Activated B cell treated with CpG ODN at 0.5 μM for 24 hours (primary cell): ENCODE measurements at regions of chr5 and their contacts with region 1.

Region 1: DNA sequence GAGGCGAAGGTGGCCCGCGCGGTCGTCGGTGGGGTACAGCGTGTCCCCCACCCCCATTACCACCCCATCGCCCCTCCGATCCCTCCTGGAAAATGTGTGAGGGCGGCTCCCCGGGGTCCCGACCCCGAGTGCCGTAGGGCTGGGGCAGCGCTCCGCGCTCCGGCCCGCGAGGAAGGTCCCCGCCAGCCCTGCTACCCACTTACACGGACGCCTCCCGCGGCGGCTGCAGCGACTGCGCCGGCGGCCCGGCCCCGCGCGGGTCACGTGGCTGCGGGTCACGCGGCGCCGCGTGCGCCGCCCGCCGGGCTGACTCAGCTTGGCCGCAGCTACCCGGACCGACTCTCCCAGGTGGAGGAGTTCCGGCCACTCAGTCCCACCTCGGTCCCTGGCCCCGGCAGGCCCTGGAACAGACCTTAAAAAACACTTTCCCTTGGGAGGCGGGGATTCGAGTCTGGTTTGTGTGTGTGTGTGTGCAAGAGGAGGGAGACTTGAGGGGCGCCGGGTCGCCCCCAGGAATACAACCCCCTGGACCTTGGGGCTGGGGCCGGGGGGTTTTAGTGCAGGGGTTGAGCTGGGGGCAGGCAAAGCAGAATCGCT is at the start of gene GNPDA1:
- DNase-seq: peak; percentile 76
- ATAC-seq: peak; percentile 83
- H3K4me3 Mint-ChIP-seq: peak within 1 kb of the TSS; percentile 88
- H3K27ac Mint-ChIP-seq: peak within 1 kb of the TSS; percentile 86
- H3K4me1 Mint-ChIP-seq: peaks cover 44% of the 10 kb centered on the region
- H3K27me3 Mint-ChIP-seq: no peaks in the 10 kb centered on the region
- CTCF ChIP-seq: no peak
- total RNA-seq, gene GNPDA1: 14.2 and 15.0 TPM in 2 replicates

Region 2: DNA sequence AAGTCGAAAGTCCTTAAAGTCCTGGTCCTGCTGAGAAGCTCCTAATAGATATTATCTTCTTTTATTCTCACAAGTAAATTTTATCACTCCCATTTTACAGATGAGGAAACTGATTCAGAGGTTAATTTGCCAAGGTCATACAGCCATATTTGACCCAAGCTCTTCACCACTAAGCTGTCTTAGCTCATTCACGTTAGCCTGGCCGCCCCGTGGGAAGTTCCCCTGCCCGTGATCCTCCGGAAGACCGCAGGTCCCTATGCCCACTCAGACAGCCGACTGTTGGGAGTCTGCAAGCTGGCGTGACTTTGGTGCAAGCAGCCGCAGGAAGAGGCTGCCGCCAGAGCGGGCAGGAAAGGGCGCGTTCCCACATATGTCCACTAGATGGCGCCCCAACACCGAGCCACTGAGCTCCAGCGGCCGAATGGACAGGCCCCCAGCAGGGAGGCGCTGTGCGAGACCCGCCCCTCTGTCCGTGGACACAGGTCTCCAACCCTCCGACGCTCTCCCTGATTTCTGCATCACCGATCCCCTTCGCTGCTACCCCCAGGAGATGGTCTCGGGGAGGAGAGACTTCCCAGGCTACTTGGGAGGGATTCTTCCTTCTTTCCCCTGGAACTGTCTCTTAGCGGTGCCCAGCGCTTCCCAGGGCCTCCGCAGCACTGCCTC is 320.9 kb before region 1 on chr5:
- CTCF ChIA-PET with region 1: interaction called, 29 read pairs
- POLR2A ChIA-PET with region 1: no interaction called
- intact Hi-C with region 1: loop called (anchors 1 kb)
- DNase-seq: peak; percentile 83
- ATAC-seq: peak; percentile 98
- H3K4me3 Mint-ChIP-seq: peak overlapping the region; percentile 47
- H3K27ac Mint-ChIP-seq: no peak overlapping the region
- H3K4me1 Mint-ChIP-seq: peaks cover 11% of the 10 kb centered on the region
- H3K27me3 Mint-ChIP-seq: peaks cover 52% of the 10 kb centered on the region
- CTCF ChIP-seq: peak; percentile 81

Region 3: GRCh38 chr5:141889282-141889871 is 123.5 kb before region 1 on chr5:
- CTCF ChIA-PET with region 1: no interaction called
- POLR2A ChIA-PET with region 1: no interaction called
- intact Hi-C with region 1: no loop called
- DNase-seq: no peak
- ATAC-seq: no peak
- H3K4me3 Mint-ChIP-seq: no peak overlapping the region
- H3K27ac Mint-ChIP-seq: no peak overlapping the region
- H3K4me1 Mint-ChIP-seq: peaks cover 4% of the 10 kb centered on the region
- H3K27me3 Mint-ChIP-seq: peaks cover 31% of the 10 kb centered on the region
- CTCF ChIP-seq: no peak

Region 4: DNA sequence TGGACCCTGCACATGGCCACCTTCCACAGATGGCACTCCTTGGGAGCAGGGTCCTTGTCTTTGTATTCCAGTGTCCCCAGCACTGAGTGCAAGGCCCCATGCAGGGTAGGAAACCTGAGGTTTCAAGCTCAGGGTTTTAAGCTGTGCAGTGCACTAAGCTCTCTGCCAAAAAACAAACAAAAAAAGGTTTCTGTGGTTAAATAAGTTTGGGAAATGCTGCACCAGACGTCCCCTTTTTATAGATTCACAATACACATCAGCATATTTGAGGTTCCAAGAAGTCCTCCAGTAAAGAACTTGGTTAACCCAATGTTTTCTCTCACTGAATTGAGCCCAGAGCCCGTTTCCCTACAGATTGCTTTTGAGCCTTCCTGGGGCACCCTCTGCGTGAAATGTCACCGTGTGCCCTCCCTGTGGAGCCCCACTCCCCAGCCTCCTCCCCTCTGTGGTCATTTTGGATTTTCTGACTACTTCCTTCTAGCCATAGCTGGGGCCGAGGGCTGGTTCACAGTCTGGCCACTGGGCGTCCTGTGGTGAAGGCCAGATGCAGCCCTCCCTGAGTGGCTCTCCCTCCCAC is 72.1 kb before region 1 on chr5:
- CTCF ChIA-PET with region 1: no interaction called
- POLR2A ChIA-PET with region 1: no interaction called
- intact Hi-C with region 1: no loop called
- DNase-seq: no peak
- ATAC-seq: no peak
- H3K4me3 Mint-ChIP-seq: no peak overlapping the region
- H3K27ac Mint-ChIP-seq: peak overlapping the region; percentile 27
- H3K4me1 Mint-ChIP-seq: no peaks in the 10 kb centered on the region
- H3K27me3 Mint-ChIP-seq: no peaks in the 10 kb centered on the region
- CTCF ChIP-seq: no peak

Region 5: DNA sequence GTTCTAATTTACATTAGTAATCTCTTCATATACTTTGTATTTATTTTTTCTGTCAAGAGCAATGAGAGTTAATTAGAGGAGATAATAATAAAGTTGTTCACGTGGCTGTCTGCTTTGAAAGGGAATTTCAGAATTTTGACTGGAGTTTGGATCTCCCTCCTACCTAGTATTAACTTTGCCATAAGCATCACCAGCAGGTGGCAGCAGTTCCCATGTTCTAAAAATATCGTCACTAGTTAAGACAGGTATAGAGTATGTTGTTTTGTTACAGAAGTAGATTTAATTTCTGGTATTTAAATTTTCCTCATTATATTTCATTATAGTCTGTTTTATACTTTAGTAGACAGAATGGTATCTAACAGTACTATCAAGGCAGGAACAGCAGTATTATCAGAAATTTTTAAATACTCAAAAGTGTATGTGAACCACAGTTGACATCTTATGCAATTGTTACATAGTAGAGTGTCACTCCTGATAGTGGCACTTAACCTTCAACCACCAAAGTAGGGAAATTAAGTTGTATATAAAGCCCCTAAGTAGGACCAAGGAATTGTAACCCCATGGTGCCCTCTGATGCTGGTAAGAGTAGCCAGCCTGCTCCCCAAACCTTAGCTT is 20.4 kb before region 1 on chr5:
- CTCF ChIA-PET with region 1: interaction called, 25 read pairs
- POLR2A ChIA-PET with region 1: interaction called, 3 read pairs
- intact Hi-C with region 1: loop called (anchors 1 kb)
- DNase-seq: no peak
- ATAC-seq: peak; percentile 50
- H3K4me3 Mint-ChIP-seq: no peak overlapping the region
- H3K27ac Mint-ChIP-seq: no peak overlapping the region
- H3K4me1 Mint-ChIP-seq: no peaks in the 10 kb centered on the region
- H3K27me3 Mint-ChIP-seq: no peaks in the 10 kb centered on the region
- CTCF ChIP-seq: peak; percentile 57

Region 6: DNA sequence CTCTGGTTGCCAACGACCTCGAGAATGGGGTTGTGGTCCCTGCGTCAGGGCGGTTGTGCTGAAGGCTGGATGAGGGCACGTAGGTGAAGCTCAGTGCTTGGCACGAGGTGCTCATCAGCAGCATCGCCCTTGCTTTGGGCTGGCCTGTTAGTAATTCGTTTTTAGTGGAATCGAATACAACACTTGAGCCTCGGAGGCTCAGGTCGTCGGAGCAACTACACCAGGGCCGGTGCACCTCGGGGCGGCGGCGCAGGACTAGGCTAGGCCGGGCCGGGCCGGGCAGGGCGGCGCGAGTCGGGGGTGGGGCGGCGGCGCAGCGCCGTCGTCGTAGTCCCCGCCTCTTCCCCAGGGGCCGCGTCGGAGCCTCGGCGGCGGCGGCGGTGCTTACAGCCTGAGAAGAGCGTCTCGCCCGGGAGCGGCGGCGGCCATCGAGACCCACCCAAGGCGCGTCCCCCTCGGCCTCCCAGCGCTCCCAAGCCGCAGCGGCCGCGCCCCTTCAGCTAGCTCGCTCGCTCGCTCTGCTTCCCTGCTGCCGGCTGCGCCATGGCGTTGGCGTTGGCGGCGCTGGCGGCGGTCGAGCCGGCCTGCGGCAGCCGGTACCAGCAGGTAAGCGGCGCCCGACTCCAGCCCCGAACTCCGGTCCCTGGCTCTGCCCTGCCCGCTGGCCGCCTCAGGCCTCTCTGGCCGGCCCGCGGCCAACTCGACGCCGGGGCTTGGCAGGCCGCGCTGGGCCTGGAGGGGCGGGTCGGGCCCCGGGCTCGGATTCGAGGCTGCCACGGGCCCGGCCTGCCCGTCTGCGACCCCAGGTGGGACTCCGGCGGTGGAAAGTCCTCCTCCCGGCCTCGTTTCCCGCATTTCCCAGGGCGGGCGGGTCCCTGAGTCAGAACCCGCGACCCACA is 95.8 kb after region 1 on chr5 and contains the start of gene NDFIP1:
- CTCF ChIA-PET with region 1: interaction called, 7 read pairs
- POLR2A ChIA-PET with region 1: interaction called, 10 read pairs
- intact Hi-C with region 1: loop called (anchors 1 kb)
- DNase-seq: peak; percentile 84
- ATAC-seq: peak; percentile 97
- H3K4me3 Mint-ChIP-seq: peak within 1 kb of the TSS; percentile 84
- H3K27ac Mint-ChIP-seq: peak within 1 kb of the TSS; percentile 83
- H3K4me1 Mint-ChIP-seq: peaks cover 31% of the 10 kb centered on the region
- H3K27me3 Mint-ChIP-seq: no peaks in the 10 kb centered on the region
- CTCF ChIP-seq: no peak
- total RNA-seq, gene NDFIP1: 19.7 and 24.2 TPM in 2 replicates

Region 7: DNA sequence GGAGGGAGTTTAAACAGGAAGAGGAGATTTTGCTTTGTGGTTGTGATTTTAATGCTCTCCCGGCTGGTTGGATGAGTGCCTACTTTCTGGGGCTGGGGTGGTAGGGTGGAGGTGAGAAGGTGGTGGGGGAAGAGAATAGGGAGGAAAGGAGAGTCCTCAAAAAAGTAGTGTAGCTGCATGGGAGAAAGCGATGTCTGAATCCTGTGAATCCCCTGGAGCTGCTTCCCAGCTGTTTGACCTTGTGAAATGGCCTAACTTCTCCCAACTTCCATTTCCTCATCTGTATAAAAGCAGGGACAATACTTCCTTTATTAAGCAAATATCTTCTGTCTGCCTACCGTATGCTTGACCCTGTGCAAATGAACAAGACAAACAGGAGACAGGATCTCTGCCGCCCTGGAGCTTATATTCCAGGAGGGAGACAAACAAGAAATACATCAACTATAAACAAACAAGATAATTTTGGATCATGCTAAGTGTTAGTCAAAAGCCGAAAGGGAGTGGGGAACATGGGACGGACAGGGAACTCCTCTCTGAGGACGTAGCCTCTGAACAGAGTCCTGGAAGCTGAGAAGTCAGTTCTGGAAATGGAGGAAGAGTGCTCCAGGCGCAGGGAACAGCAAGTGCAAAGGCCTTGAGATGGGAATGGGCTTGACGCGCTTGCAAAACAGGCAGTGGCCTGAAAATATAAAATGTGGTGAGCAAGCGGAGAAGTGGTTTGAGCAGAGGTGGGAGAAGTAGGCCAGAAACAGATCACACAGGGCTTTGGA is 208.4 kb after region 1 on chr5:
- CTCF ChIA-PET with region 1: no interaction called
- POLR2A ChIA-PET with region 1: no interaction called
- intact Hi-C with region 1: loop called (anchors 5 kb)
- DNase-seq: no peak
- ATAC-seq: no peak
- H3K4me3 Mint-ChIP-seq: no peak overlapping the region
- H3K27ac Mint-ChIP-seq: no peak overlapping the region
- H3K4me1 Mint-ChIP-seq: peaks cover 28% of the 10 kb centered on the region
- H3K27me3 Mint-ChIP-seq: peaks cover 16% of the 10 kb centered on the region
- CTCF ChIP-seq: no peak